Kidney (tissue), 22 donors: ENCODE measurements at regions of chr4 and their contacts with region 1.

Region 1: GRCh38 chr4:52853351-52853750 is 8.8 kb upstream of the RASL11B start:
- DNase-seq: no peak
- H3K4me3 ChIP-seq: no peak overlapping the region
- H3K27ac ChIP-seq: no peak overlapping the region
- H3K4me1 ChIP-seq: peaks cover 0 to 3% (median 0%) of the 10 kb centered on the region in 3 donors
- H3K27me3 ChIP-seq: no peaks in the 10 kb centered on the region
- CTCF ChIP-seq: no peak

Region 2: DNA sequence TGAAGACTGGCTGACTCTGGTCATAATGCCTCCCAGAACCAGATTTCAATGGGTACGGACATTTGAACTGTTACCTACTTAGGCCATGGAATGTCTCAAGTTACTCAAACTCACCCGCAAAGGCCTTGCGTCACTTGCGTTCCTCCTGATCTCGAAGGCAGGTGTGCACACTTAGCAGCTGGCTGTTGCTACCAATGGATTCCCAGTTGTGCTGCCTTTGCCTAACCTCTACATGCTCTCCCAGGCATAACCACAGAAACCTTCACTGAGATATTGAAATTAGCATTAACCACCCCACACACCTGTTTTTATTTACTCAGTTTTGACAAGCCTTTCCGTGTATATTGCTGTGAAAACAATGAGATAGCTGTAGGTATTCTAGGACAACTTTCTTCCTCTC is 104.9 kb before region 1 on chr4:
- intact Hi-C with region 1: loop called (anchors 10 kb)
- DNase-seq: peak in 2 of 5 donors; percentile 21 to 32
- H3K4me3 ChIP-seq: no peak overlapping the region
- H3K27ac ChIP-seq: no peak overlapping the region
- H3K4me1 ChIP-seq: peaks cover 0 to 3% (median 3%) of the 10 kb centered on the region in 3 donors
- H3K27me3 ChIP-seq: no peaks in the 10 kb centered on the region
- CTCF ChIP-seq: no peak

Region 3: GRCh38 chr4:52983563-52984303 is 130.4 kb after region 1 on chr4:
- intact Hi-C with region 1: no loop called
- DNase-seq: peak in 2 of 5 donors; percentile 77 to 83
- H3K4me3 ChIP-seq: no peak overlapping the region
- H3K27ac ChIP-seq: peak overlapping the region in 1 of 2 donors; percentile 2
- H3K4me1 ChIP-seq: peaks cover 5 to 8% (median 5%) of the 10 kb centered on the region in 3 donors
- H3K27me3 ChIP-seq: no peaks in the 10 kb centered on the region
- CTCF ChIP-seq: peak; percentile 68

Region 4: GRCh38 chr4:53185869-53186585 is 332.7 kb after region 1 on chr4:
- intact Hi-C with region 1: no loop called
- DNase-seq: peak in 1 of 5 donors; percentile 45
- H3K4me3 ChIP-seq: no peak overlapping the region
- H3K27ac ChIP-seq: no peak overlapping the region
- H3K4me1 ChIP-seq: peaks cover 2 to 7% (median 3%) of the 10 kb centered on the region in 3 donors
- H3K27me3 ChIP-seq: no peaks in the 10 kb centered on the region
- CTCF ChIP-seq: no peak